Prostate gland (tissue), 2 donors: ENCODE measurements at regions of chr2 and their contacts with region 1.

Region 1: GRCh38 chr2:197168705-197169104 is 141.9 kb downstream of the ANKRD44 start:
- DNase-seq: no peak
- H3K4me3 ChIP-seq: no peak overlapping the region
- H3K27ac ChIP-seq: no peak overlapping the region
- H3K4me1 ChIP-seq: no peaks in the 10 kb centered on the region
- H3K27me3 ChIP-seq: no peaks in the 10 kb centered on the region
- CTCF ChIP-seq: peak in 3 of 4 experiments; percentile 17 to 45 (median 18)
- POLR2A ChIP-seq: no peak

Region 2: GRCh38 chr2:197124639-197125390 is 43.9 kb before region 1 on chr2:
- intact Hi-C with region 1: loop called (anchors 5 kb)
- DNase-seq: no peak
- H3K4me3 ChIP-seq: no peak overlapping the region
- H3K27ac ChIP-seq: no peak overlapping the region
- H3K4me1 ChIP-seq: peaks cover 3% of the 10 kb centered on the region
- H3K27me3 ChIP-seq: no peaks in the 10 kb centered on the region
- CTCF ChIP-seq: no peak
- POLR2A ChIP-seq: no peak